A549 (cell line): ENCODE measurements at regions of chr19 and their contacts with region 1.

Region 1: GRCh38 chr19:33235269-33235995 is 9.8 kb upstream of the SLC7A10 start:
- DNase-seq: peak; percentile 88 to 98
- ATAC-seq: peak; percentile 66 to 90
- H3K4me3 ChIP-seq: no peak overlapping the region
- H3K27ac ChIP-seq: 0 out of 6 replicates have a peak overlapping the region, but pooled peaks of 1 of the 2 experiments have one; percentile 13
- H3K4me1 ChIP-seq: no peaks in the 10 kb centered on the region; the same call in 2 of the 3 replicates
- CTCF ChIP-seq: peak; percentile 99
- EP300 ChIP-seq: no peak
- POLR2A ChIP-seq: no peak
- RAD21 ChIP-seq: peak; percentile 94 to 95

Region 2: DNA sequence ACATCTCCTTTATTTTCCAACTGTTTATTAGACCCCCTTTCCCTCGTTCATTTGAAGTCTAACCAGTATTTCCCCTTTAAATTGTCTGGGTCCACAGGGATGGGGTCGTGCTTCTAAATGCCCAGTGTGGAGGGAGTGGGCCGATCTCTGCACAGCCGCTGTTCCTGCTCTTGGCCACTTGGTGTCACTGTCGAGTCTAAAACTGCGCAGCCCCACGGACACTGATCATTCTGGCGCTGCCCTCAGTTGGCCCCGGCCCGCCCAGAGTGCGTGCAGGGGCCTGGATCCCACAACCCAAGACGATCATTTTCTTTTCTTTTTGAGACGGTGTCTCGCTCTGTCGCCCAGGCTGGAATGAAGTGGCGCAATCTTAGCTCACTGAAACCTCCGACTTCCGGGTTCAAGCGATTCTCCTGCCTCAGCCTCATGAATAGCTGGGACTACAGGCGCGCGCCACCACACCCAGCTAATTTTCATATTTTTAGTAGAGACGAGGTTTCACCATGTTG is 91.5 kb before region 1 on chr19:
- CTCF ChIA-PET with region 1: interaction called, 20 read pairs
- POLR2A ChIA-PET with region 1: no interaction called
- DNase-seq: peak; percentile 83 to 98
- ATAC-seq: peak; percentile 91 to 97
- H3K4me3 ChIP-seq: no peak overlapping the region
- H3K27ac ChIP-seq: peak overlapping the region; percentile 14 to 62; a peak in 4 of 6 replicates
- H3K4me1 ChIP-seq: no peaks in the 10 kb centered on the region
- CTCF ChIP-seq: peak; percentile 99
- EP300 ChIP-seq: no peak
- POLR2A ChIP-seq: no peak
- RAD21 ChIP-seq: peak; percentile 97

Region 3: DNA sequence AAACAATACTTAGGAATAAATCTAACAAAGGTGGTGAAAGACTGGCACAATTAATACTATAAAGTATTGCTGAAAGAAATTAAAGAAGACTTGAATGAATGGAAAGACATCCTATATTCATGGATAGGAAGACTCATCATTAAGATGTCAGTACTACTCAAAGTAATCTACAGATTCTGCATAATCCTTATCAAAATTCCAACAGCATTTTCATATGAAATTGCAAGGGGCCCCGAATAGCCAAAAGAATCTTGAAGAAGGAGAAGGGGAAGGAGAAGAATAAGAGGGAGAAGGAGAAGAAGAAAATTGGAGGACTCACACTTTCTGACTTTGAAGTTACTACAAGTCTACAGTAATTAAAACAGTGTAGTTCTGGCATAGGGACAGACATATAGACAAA is 66.9 kb before region 1 on chr19:
- CTCF ChIA-PET with region 1: no interaction called
- POLR2A ChIA-PET with region 1: no interaction called
- DNase-seq: no peak
- ATAC-seq: no peak
- H3K4me3 ChIP-seq: no peak overlapping the region
- H3K27ac ChIP-seq: no peak overlapping the region
- H3K4me1 ChIP-seq: peaks cover 14% of the 10 kb centered on the region
- CTCF ChIP-seq: no peak
- EP300 ChIP-seq: no peak
- POLR2A ChIP-seq: no peak
- RAD21 ChIP-seq: no peak

Region 4: DNA sequence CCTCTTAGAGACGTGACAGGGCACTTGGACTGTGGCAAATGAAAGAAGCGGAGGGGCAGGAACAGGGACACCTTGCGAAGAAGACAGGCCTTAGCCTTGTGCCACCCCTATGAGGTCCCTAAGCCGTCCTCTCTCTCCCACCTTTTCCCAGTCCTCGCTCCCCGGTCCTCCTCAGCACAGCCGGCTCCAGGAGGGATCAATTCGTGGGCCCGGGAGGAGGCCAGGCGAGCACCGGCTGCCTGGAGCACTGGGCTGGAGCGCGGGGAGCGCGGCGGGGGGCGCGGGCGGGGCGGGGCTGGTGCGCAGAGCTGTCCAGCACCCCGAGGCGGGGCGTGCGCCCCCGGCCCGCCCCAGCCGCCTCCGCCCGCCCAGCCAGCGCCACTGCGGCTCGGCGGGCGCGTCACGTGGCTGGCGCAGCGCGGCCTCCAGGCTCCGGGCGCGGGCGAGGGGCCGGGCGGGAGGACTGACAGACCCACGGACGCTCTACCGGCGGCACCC is 41.5 kb before region 1 on chr19 and contains the start of gene LRP3:
- CTCF ChIA-PET with region 1: interaction called, 29 read pairs
- POLR2A ChIA-PET with region 1: no interaction called
- DNase-seq: peak in 1 of 2 experiments; percentile 55
- ATAC-seq: peak; percentile 59 to 64
- H3K4me3 ChIP-seq: peak within 1 kb of the TSS; percentile 69
- H3K27ac ChIP-seq: peak within 1 kb of the TSS; percentile 71 to 91
- H3K4me1 ChIP-seq: peaks cover 10% of the 10 kb centered on the region; the same call in 2 of the 3 replicates
- CTCF ChIP-seq: no peak
- EP300 ChIP-seq: no peak
- POLR2A ChIP-seq: peak; percentile 36; the same call in 1 of the 2 replicates
- RAD21 ChIP-seq: no peak
- polyA plus RNA-seq, gene LRP3: 10.9 and 16.1 TPM in 2 replicates

Region 5: DNA sequence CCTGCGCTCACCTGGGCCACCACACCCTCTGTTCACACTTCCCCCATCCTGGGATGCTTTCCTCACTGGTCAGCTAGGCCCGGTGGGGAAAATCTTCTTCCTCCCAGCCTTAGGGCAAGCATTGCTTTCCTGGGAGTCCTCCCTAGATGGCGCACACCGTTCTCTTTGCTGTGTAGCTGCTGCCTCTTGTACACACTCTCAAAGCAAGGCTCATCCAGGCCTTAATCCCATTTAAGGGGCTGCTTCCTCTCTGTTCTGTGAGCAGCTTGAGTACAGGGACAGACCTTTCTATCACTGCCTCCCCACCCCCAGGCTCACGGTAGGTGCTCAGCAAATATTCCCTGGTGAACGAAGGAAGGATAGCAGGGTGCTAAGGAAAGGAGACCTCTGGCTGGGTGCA is 20.8 kb before region 1 on chr19:
- CTCF ChIA-PET with region 1: interaction called, 39 read pairs
- POLR2A ChIA-PET with region 1: no interaction called
- DNase-seq: peak; percentile 66 to 72
- ATAC-seq: peak; percentile 48 to 76; a peak in 5 of 6 replicates
- H3K4me3 ChIP-seq: no peak overlapping the region
- H3K27ac ChIP-seq: no peak overlapping the region
- H3K4me1 ChIP-seq: no peaks in the 10 kb centered on the region
- CTCF ChIP-seq: peak; percentile 47
- EP300 ChIP-seq: no peak
- POLR2A ChIP-seq: no peak
- RAD21 ChIP-seq: peak; percentile 25 to 48; a peak in 3 of 5 replicates

Region 6: GRCh38 chr19:33260628-33261418 is 25.4 kb after region 1 on chr19:
- CTCF ChIA-PET with region 1: interaction called, 105 read pairs
- POLR2A ChIA-PET with region 1: no interaction called
- DNase-seq: no peak
- ATAC-seq: 0 out of 6 replicates have a peak, but pooled peaks of 1 of the 2 experiments have one; percentile 7
- H3K4me3 ChIP-seq: no peak overlapping the region
- H3K27ac ChIP-seq: no peak overlapping the region
- H3K4me1 ChIP-seq: no peaks in the 10 kb centered on the region
- CTCF ChIP-seq: no peak
- EP300 ChIP-seq: no peak
- POLR2A ChIP-seq: no peak
- RAD21 ChIP-seq: no peak

Region 7: GRCh38 chr19:33311326-33311682 is 75.9 kb after region 1 on chr19:
- CTCF ChIA-PET with region 1: interaction called, 603 read pairs
- POLR2A ChIA-PET with region 1: no interaction called
- DNase-seq: no peak
- ATAC-seq: peak; percentile 61 to 77; a peak in 5 of 6 replicates
- H3K4me3 ChIP-seq: no peak overlapping the region
- H3K27ac ChIP-seq: no peak overlapping the region
- H3K4me1 ChIP-seq: peaks cover 8% of the 10 kb centered on the region
- CTCF ChIP-seq: peak; percentile 48
- EP300 ChIP-seq: no peak
- POLR2A ChIP-seq: no peak
- RAD21 ChIP-seq: peak; percentile 56 to 63

Region 8: GRCh38 chr19:33373701-33374421 is 138.4 kb after region 1 on chr19 and contains the start of gene CEBPG:
- CTCF ChIA-PET with region 1: interaction called, 54 read pairs
- POLR2A ChIA-PET with region 1: interaction called, 4 read pairs
- DNase-seq: peak in 1 of 2 experiments; percentile 93
- ATAC-seq: peak; percentile 29 to 75
- H3K4me3 ChIP-seq: peak within 1 kb of the TSS; percentile 65
- H3K27ac ChIP-seq: peak within 1 kb of the TSS; percentile 92 to 95
- H3K4me1 ChIP-seq: peaks cover 37% of the 10 kb centered on the region
- CTCF ChIP-seq: peak; percentile 43
- EP300 ChIP-seq: peak in 1 of 2 experiments; percentile 67; a peak in 2 of 5 replicates
- POLR2A ChIP-seq: peak; percentile 73
- RAD21 ChIP-seq: no peak
- polyA plus RNA-seq, gene CEBPG: 104 and 138 TPM in 2 replicates